PC-3 (cell line): ENCODE measurements at regions of chr5 and their contacts with region 1.

Region 1: GRCh38 chr5:53874409-53874808 is 314.0 kb downstream of the NDUFS4 start:
- DNase-seq: peak; percentile 21
- ATAC-seq: no peak
- H3K4me3 ChIP-seq: no peak overlapping the region
- H3K27ac ChIP-seq: no peak overlapping the region
- H3K4me1 ChIP-seq: no peaks in the 10 kb centered on the region
- H3K27me3 ChIP-seq: no peaks in the 10 kb centered on the region
- CTCF ChIP-seq: 0 out of 2 replicates have a peak, but pooled peaks have one; percentile 10

Region 2: GRCh38 chr5:53425598-53426511 is 448.6 kb before region 1 on chr5:
- CTCF ChIA-PET with region 1: no interaction called
- POLR2A ChIA-PET with region 1: no interaction called
- intact Hi-C with region 1: loop called (anchors 5 kb)
- DNase-seq: peak; percentile 46
- ATAC-seq: no peak
- H3K4me3 ChIP-seq: no peak overlapping the region
- H3K27ac ChIP-seq: peak overlapping the region; percentile 100
- H3K4me1 ChIP-seq: peaks cover 73% of the 10 kb centered on the region
- H3K27me3 ChIP-seq: no peaks in the 10 kb centered on the region
- CTCF ChIP-seq: peak; percentile 53

Region 3: GRCh38 chr5:53568871-53569270 is 305.5 kb before region 1 on chr5:
- CTCF ChIA-PET with region 1: no interaction called
- POLR2A ChIA-PET with region 1: no interaction called
- intact Hi-C with region 1: no loop called
- DNase-seq: no peak
- ATAC-seq: 0 out of 2 replicates have a peak, but pooled peaks have one; percentile 22
- H3K4me3 ChIP-seq: no peak overlapping the region
- H3K27ac ChIP-seq: no peak overlapping the region
- H3K4me1 ChIP-seq: peaks cover 8% of the 10 kb centered on the region; the same call in 1 of the 2 replicates
- H3K27me3 ChIP-seq: no peaks in the 10 kb centered on the region
- CTCF ChIP-seq: no peak

Region 4: GRCh38 chr5:53730943-53731342 is 143.5 kb before region 1 on chr5:
- CTCF ChIA-PET with region 1: no interaction called
- POLR2A ChIA-PET with region 1: no interaction called
- intact Hi-C with region 1: loop called (anchors 10 kb)
- DNase-seq: no peak
- ATAC-seq: no peak
- H3K4me3 ChIP-seq: no peak overlapping the region
- H3K27ac ChIP-seq: no peak overlapping the region
- H3K4me1 ChIP-seq: no peaks in the 10 kb centered on the region
- H3K27me3 ChIP-seq: no peaks in the 10 kb centered on the region
- CTCF ChIP-seq: no peak

Region 5: GRCh38 chr5:54013556-54014194 is 139.3 kb after region 1 on chr5:
- CTCF ChIA-PET with region 1: no interaction called
- POLR2A ChIA-PET with region 1: no interaction called
- intact Hi-C with region 1: no loop called
- DNase-seq: peak; percentile 60
- ATAC-seq: peak; percentile 48
- H3K4me3 ChIP-seq: no peak overlapping the region
- H3K27ac ChIP-seq: no peak overlapping the region
- H3K4me1 ChIP-seq: no peaks in the 10 kb centered on the region
- H3K27me3 ChIP-seq: no peaks in the 10 kb centered on the region
- CTCF ChIP-seq: no peak